ENCODE measurements at regions of chr15 and their contacts with region 1.

Region 1: GRCh38 chr15:75738647-75739331 is 26.1 kb upstream of the CSPG4 start:
- DNase-seq: peak; percentile 94
- H3K4me3 Mint-ChIP-seq: peak overlapping the region; percentile 82
- H3K27ac Mint-ChIP-seq: no peak overlapping the region
- H3K4me1 Mint-ChIP-seq: peaks cover 5% of the 10 kb centered on the region
- H3K27me3 Mint-ChIP-seq: peaks cover 5% of the 10 kb centered on the region

Region 2: DNA sequence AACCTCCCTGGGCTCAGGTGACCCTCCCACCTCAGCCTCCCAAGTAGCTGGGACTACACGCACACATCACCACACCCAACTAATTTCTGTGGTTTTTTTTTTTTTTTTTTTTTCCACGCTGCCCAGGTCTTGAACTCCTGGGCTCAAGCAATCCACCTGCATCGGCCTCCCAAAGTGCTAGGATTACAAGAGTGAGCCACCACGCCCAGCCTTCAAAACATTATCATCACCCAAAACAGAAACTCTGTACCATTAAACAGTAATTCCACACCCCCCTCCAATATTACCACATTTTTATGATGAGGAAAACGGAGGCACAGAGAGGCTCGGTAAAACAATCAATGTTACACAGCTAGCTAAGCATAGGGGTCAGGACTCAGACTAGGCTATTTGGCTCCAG is 102.8 kb before region 1 on chr15:
- CTCF ChIA-PET with region 1: no interaction called
- intact Hi-C with region 1: no loop called
- DNase-seq: no peak
- H3K4me3 Mint-ChIP-seq: no peak overlapping the region
- H3K27ac Mint-ChIP-seq: no peak overlapping the region
- H3K4me1 Mint-ChIP-seq: peaks cover 29% of the 10 kb centered on the region
- H3K27me3 Mint-ChIP-seq: no peaks in the 10 kb centered on the region

Region 3: GRCh38 chr15:75684642-75685041 is 54.1 kb before region 1 on chr15:
- CTCF ChIA-PET with region 1: no interaction called
- intact Hi-C with region 1: loop called (anchors 5 kb)
- DNase-seq: no peak
- H3K4me3 Mint-ChIP-seq: no peak overlapping the region
- H3K27ac Mint-ChIP-seq: no peak overlapping the region
- H3K4me1 Mint-ChIP-seq: no peaks in the 10 kb centered on the region
- H3K27me3 Mint-ChIP-seq: no peaks in the 10 kb centered on the region

Region 4: DNA sequence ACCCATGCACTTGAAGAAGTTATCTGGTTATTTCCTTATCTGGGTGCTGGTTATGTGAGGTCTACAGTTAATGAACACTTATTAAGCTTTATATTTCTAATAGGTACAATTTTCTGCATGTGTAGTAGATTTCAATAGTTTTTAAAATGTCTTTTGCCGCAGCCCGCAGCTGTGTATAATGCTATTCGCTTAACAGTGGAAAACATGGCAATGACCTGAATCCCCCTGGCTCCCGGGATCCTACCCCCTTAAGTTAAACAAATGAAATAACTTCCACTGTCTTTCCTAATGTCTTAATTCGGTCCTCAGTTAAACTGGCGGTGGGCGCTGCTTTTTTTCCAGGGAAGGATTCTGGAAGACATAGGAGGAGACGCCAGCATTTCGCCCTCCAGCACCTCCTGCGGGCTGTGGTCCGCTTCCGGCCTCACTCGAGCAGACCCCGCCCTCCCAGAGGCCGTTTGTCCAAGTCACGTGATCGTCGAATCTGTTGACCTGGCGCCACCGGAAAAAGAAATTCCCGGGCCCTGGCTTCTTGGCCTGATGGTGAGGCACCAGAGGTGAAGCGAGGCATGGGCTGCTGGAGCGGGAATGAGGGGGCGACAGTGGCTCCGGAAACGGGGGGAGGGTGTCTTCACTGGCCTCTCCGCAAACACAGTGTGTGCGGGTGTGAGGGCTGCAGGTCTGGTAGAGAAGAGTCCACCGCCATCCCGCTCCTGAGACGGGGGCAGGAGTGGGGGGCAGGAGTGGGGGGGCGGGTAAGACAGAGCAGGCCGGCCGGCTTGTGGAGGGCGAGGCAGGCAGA is 19.5 kb after region 1 on chr15:
- CTCF ChIA-PET with region 1: interaction called, 3 read pairs
- intact Hi-C with region 1: loop called (anchors 1 kb)
- DNase-seq: peak; percentile 84
- H3K4me3 Mint-ChIP-seq: peak overlapping the region; percentile 94
- H3K27ac Mint-ChIP-seq: peak overlapping the region; percentile 95
- H3K4me1 Mint-ChIP-seq: peaks cover 11% of the 10 kb centered on the region
- H3K27me3 Mint-ChIP-seq: no peaks in the 10 kb centered on the region

Region 5: DNA sequence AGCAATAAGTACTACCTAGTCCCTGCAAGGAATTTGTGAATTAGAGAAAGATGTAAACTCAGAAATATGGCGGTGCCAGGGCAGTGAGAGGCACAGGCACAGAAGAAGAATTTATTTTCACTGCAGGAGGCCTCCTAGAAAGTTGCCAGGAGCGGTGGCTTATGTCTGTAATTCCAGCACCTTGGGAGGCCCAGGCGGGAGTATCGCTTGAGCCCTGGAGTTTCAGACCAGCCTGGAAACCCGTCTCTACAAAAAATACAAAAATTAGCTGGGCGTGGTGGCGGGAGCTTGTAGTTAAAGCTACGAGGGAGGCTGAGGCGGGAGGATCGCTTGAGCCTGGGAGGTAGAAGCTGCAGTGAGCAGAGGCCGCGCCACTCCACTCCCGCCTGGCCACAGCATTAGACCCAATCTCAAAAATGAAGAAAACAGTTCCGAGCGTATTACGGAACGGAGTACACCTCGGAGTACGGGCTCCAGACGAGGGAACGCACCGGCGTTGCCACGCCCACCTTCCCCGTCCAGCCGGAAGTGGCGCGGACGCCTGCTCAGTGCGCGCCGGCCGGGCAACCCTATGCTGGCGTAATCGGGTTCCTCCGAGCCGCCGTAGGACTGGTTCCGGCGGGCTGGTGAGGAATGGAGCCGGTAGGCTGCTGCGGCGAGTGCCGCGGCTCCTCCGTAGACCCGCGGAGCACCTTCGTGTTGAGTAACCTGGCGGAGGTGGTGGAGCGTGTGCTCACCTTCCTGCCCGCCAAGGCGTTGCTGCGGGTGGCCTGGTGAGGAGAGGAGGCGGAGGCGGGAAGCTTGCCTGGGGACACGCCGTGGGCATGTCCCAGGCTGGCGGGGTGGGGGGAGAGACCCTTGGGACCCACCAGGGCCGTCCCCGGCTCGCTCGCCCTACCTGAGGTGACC is 164.8 kb after region 1 on chr15 and contains the start of gene FBXO22:
- CTCF ChIA-PET with region 1: no interaction called
- intact Hi-C with region 1: loop called (anchors 5 kb)
- DNase-seq: peak; percentile 95
- H3K4me3 Mint-ChIP-seq: peak within 1 kb of the TSS; percentile 93
- H3K27ac Mint-ChIP-seq: peak within 1 kb of the TSS; percentile 90
- H3K4me1 Mint-ChIP-seq: peaks cover 45% of the 10 kb centered on the region
- H3K27me3 Mint-ChIP-seq: no peaks in the 10 kb centered on the region
- total RNA-seq, gene FBXO22: 97.3 to 99.6 TPM